CD4-positive, alpha-beta memory T cell (primary cell): ENCODE measurements at regions of chr10 and their contacts with region 1.

Region 1: DNA sequence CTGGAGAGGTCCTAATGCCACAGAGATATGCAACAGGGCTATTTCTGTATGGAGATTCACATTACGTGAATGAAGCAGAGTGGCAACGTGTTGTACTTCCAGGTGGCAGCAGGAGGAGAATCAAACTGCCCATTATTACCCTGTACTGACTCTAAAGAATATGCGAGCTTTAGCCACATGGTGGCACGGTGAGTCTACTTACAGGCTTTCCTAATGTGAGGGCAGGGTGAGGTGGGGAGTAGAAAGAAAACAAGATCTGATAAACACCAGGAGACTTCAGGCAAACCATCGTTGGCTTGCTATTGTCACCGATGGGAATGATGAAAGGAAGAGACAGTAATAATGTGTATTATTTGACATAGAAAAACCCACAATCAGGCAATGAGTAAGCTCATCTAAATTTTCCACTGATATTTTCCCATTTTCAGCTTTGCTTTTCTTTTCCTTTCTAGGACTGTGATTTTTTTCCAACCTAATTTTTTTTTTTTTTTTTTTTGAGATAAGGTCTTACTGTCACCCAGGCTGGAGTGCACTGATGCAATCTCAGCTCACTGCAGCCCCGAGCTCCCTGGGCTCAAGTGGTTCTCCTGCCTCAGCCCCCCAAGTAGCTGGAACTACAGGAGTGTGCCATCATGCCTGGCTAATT is 164.3 kb downstream of the BTAF1 start:
- DNase-seq: peak; percentile 43 to 60 (median 51)
- H3K4me3 ChIP-seq: no peak overlapping the region
- H3K4me3 Mint-ChIP-seq: no peak overlapping the region
- H3K27ac ChIP-seq: no peak overlapping the region
- H3K27ac Mint-ChIP-seq: peak overlapping the region in 1 of 7 donors; percentile 22
- H3K4me1 ChIP-seq: no peaks in the 10 kb centered on the region
- H3K4me1 Mint-ChIP-seq: peaks cover 0 to 6% (median 3%) of the 10 kb centered on the region in 4 donors
- H3K27me3 ChIP-seq: no peaks in the 10 kb centered on the region
- H3K27me3 Mint-ChIP-seq: no peaks in the 10 kb centered on the region

Region 2: GRCh38 chr10:90642136-90642535 is 1445.7 kb before region 1 on chr10:
- CTCF ChIA-PET with region 1: no interaction called
- POLR2A ChIA-PET with region 1: no interaction called
- intact Hi-C with region 1: no loop called
- DNase-seq: no peak
- H3K4me3 ChIP-seq: no peak overlapping the region
- H3K4me3 Mint-ChIP-seq: no peak overlapping the region
- H3K27ac ChIP-seq: no peak overlapping the region
- H3K27ac Mint-ChIP-seq: no peak overlapping the region
- H3K4me1 ChIP-seq: no peaks in the 10 kb centered on the region
- H3K4me1 Mint-ChIP-seq: no peaks in the 10 kb centered on the region
- H3K27me3 ChIP-seq: no peaks in the 10 kb centered on the region
- H3K27me3 Mint-ChIP-seq: no peaks in the 10 kb centered on the region

Region 3: DNA sequence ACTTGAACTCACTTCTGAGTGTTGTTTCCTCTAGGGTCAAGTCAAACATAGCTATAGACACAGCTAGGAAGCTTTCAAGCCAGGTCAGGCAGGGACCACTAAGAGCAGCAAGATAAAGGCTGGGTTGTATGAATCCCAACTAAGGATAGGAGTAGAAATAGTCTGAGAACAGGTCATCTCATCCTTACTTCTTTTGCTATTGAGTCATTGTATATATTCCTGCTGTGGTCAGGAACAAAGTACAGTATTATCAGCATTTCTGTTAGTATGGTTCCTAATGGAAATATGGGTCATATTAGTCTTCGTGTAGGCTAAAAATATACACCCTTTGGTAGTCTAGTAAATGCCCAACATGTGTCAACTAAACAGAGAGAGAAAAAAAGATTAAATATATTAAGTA is 19.0 kb before region 1 on chr10:
- CTCF ChIA-PET with region 1: no interaction called
- POLR2A ChIA-PET with region 1: no interaction called
- intact Hi-C with region 1: no loop called
- DNase-seq: no peak
- H3K4me3 ChIP-seq: no peak overlapping the region
- H3K4me3 Mint-ChIP-seq: no peak overlapping the region
- H3K27ac ChIP-seq: no peak overlapping the region
- H3K27ac Mint-ChIP-seq: no peak overlapping the region
- H3K4me1 ChIP-seq: no peaks in the 10 kb centered on the region
- H3K4me1 Mint-ChIP-seq: no peaks in the 10 kb centered on the region
- H3K27me3 ChIP-seq: no peaks in the 10 kb centered on the region
- H3K27me3 Mint-ChIP-seq: no peaks in the 10 kb centered on the region

Region 4: DNA sequence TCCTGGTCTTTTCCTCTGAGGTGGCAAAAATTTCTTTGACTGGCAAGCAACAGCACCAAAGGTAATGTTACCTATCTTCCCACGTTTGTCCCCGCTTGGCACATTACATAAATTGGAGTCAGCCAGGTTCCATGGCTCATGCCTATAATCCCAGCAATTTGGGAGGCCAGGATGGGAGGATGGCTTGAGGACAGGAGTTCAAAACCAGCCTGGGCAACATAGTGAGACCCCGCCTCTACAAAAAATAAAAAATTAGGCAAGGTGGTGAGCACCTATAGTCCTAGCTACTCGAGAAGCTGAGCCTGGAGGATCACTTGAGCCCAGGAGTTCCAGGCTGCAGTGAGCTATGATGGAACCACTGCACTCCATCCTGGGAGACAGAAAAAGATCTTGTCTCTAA is 346.5 kb after region 1 on chr10:
- CTCF ChIA-PET with region 1: interaction called, 13 read pairs
- POLR2A ChIA-PET with region 1: no interaction called
- intact Hi-C with region 1: no loop called
- DNase-seq: no peak
- H3K4me3 ChIP-seq: no peak overlapping the region
- H3K4me3 Mint-ChIP-seq: no peak overlapping the region
- H3K27ac ChIP-seq: no peak overlapping the region
- H3K27ac Mint-ChIP-seq: no peak overlapping the region
- H3K4me1 ChIP-seq: no peaks in the 10 kb centered on the region
- H3K4me1 Mint-ChIP-seq: no peaks in the 10 kb centered on the region
- H3K27me3 ChIP-seq: no peaks in the 10 kb centered on the region
- H3K27me3 Mint-ChIP-seq: no peaks in the 10 kb centered on the region

Region 5: GRCh38 chr10:92629945-92630344 is 542.1 kb after region 1 on chr10:
- CTCF ChIA-PET with region 1: no interaction called
- POLR2A ChIA-PET with region 1: no interaction called
- intact Hi-C with region 1: loop called (anchors 5 kb)
- DNase-seq: no peak
- H3K4me3 ChIP-seq: no peak overlapping the region
- H3K4me3 Mint-ChIP-seq: no peak overlapping the region
- H3K27ac ChIP-seq: no peak overlapping the region
- H3K27ac Mint-ChIP-seq: no peak overlapping the region
- H3K4me1 ChIP-seq: no peaks in the 10 kb centered on the region
- H3K4me1 Mint-ChIP-seq: no peaks in the 10 kb centered on the region
- H3K27me3 ChIP-seq: no peaks in the 10 kb centered on the region
- H3K27me3 Mint-ChIP-seq: no peaks in the 10 kb centered on the region